ENCODE measurements at regions of chr5 and their contacts with region 1.

Region 1: GRCh38 chr5:173615884-173616576 is 420 bp downstream of the BOD1 start:
- DNase-seq: peak; percentile 84
- ATAC-seq: peak; percentile 63
- H3K4me3 Mint-ChIP-seq: peak overlapping the region; percentile 86
- H3K27ac Mint-ChIP-seq: peak overlapping the region; percentile 84
- H3K4me1 Mint-ChIP-seq: peaks cover 30% of the 10 kb centered on the region
- H3K27me3 Mint-ChIP-seq: no peaks in the 10 kb centered on the region

Region 2: GRCh38 chr5:173707392-173707791 is 91.4 kb after region 1 on chr5:
- CTCF ChIA-PET with region 1: no interaction called
- DNase-seq: no peak
- ATAC-seq: no peak
- H3K4me3 Mint-ChIP-seq: no peak overlapping the region
- H3K27ac Mint-ChIP-seq: no peak overlapping the region
- H3K4me1 Mint-ChIP-seq: no peaks in the 10 kb centered on the region
- H3K27me3 Mint-ChIP-seq: no peaks in the 10 kb centered on the region

Region 3: DNA sequence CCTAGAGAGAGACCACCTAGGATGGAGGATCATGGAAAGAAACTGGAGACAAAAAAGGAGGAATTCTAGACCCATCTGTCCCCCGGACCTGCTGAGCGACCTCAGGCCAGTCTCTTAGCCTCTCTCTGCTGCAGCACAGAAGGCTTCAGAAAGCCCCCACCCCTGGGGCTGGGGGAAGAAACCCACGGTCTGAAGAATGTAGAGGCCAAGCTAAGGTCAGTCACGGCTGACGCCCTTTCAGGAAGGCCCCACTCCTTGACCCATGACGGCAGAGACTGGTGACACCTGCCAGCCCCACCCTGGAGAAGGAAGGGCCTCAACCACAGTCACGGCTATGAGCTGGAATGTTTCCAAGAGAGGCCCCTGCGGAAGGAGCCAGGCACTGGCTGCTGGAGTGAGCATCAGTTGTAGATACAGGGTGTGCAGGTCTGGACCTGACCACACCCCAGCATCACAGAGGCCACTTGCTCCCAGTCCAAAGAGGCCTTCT is 120.9 kb after region 1 on chr5:
- CTCF ChIA-PET with region 1: no interaction called
- DNase-seq: no peak
- ATAC-seq: no peak
- H3K4me3 Mint-ChIP-seq: no peak overlapping the region
- H3K27ac Mint-ChIP-seq: no peak overlapping the region
- H3K4me1 Mint-ChIP-seq: no peaks in the 10 kb centered on the region
- H3K27me3 Mint-ChIP-seq: no peaks in the 10 kb centered on the region

Region 4: DNA sequence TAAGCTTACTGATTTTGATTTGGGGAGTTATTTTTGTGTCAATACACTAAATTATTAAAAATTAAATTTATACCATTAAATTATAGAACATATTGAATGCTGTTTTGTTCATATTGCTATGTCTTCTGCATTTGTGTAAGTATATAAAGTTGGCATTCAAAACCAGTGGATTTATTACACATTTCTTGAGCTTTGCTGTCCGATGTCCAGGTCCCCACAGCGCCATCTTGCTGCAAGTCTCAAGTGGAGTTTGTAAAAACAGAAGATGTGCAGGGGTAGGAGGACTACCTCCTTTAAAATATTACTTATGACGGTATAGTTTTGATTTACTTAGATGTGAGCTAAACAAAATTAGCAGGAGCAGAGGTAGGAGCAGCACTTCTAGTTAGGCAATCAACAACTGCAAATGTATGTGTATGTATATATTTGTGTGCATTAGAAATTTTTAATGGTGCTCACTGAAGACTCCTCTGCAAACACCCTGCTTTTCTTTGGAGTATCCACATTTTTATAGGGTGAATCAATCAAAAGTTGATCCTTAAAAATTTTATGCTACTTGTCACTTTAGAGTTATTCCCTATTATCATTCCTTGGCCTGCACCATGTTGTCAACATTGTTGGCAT is 309.5 kb after region 1 on chr5:
- CTCF ChIA-PET with region 1: interaction called, 18 read pairs
- DNase-seq: peak; percentile 54
- ATAC-seq: no peak
- H3K4me3 Mint-ChIP-seq: no peak overlapping the region
- H3K27ac Mint-ChIP-seq: no peak overlapping the region
- H3K4me1 Mint-ChIP-seq: peaks cover 2% of the 10 kb centered on the region
- H3K27me3 Mint-ChIP-seq: no peaks in the 10 kb centered on the region

Region 5: GRCh38 chr5:173972925-173973615 is 357.0 kb after region 1 on chr5:
- CTCF ChIA-PET with region 1: interaction called, 74 read pairs
- DNase-seq: peak; percentile 80
- ATAC-seq: peak; percentile 84
- H3K4me3 Mint-ChIP-seq: peak overlapping the region; percentile 55
- H3K27ac Mint-ChIP-seq: no peak overlapping the region
- H3K4me1 Mint-ChIP-seq: peaks cover 9% of the 10 kb centered on the region
- H3K27me3 Mint-ChIP-seq: peaks cover 15% of the 10 kb centered on the region